HAP-1 (cell line): ENCODE measurements at regions of chr6 and their contacts with region 1.

Region 1: DNA sequence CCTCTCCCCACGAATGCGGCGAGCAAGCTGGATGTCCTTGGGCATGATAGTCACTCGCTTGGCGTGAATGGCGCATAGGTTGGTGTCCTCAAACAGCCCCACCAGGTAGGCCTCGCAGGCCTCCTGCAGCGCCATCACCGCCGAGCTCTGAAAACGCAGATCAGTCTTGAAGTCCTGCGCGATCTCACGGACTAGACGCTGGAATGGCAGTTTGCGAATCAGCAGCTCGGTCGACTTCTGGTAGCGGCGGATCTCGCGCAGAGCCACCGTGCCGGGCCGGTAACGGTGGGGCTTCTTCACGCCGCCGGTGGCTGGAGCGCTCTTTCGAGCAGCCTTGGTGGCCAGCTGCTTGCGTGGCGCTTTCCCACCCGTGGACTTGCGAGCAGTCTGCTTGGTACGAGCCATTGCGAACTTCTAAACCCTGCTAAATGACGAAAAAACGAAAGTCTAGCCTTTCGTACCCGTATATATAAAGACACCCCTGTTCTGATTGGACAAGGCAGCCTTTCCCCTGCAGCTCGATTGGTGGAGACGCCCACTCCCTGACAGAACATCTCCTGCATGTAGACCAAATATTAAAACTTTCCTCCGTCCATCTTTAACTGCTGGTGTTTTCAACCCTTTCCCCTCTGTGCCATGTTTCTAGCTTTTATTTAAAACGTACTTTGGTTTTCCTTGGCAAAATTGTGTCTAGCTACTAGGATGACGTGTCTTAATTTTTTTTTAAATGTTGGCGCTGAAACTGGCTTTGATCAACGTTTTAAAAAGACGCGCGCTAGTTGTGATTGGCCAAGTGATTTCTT is 109.8 kb downstream of the HFE start:
- DNase-seq: peak; percentile 89 to 94
- H3K4me3 ChIP-seq: peak overlapping the region; percentile 73
- H3K4me1 ChIP-seq: peaks cover 27% of the 10 kb centered on the region
- H3K27me3 ChIP-seq: no peaks in the 10 kb centered on the region

Region 2: DNA sequence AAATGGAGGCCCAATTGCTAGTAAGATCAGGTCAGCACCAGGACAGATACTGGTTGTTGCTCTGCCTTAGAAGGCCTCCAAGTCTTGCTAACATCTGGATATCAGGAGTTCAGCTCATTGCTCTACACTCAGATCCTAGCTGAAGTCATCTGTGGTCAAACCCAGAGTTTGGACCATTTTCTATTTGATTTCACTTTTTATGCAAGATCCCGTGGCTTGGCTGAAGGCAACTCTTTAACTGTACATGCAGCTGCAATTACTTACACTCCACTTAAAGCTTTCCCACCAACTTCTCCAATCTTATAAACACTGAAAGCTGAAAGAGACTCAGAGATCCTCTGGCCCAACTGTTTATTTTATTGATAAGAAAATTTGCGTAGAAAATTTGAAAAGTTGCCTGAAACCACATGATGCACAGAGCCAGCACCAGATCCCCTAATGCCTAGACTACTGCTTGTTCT is 269.3 kb before region 1 on chr6:
- in situ Hi-C with region 1: no loop called
- DNase-seq: no peak
- H3K4me3 ChIP-seq: no peak overlapping the region
- H3K4me1 ChIP-seq: no peaks in the 10 kb centered on the region
- H3K27me3 ChIP-seq: no peaks in the 10 kb centered on the region

Region 3: DNA sequence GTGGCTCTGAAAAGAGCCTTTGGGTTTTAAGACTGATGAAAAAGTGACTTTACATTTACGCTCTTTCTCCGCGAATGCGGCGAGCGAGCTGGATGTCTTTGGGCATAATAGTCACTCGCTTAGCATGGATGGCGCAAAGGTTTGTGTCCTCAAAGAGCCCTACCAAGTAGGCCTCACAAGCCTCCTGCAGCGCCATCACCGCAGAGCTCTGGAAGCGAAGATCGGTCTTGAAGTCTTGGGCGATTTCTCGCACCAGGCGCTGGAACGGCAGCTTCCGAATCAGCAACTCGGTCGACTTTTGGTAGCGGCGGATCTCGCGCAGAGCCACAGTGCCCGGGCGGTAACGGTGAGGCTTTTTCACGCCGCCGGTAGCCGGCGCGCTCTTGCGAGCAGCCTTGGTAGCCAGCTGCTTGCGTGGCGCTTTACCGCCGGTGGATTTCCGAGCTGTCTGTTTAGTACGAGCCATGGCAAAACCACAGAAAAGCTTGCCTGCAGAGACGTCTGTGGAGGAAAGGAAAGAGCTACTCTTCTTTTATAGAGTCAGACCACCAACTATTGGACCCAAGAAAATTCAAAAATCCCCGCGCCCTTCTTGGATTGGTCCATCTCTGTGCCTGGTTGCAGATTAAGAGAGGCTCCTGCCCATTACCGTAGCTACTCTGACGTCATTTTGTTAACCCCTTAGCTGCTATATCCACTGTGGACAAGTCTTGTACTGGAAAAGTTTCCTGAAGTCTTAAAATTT is 165.3 kb before region 1 on chr6:
- in situ Hi-C with region 1: loop called (anchors 10 kb)
- DNase-seq: peak; percentile 93 to 97
- H3K4me3 ChIP-seq: peak overlapping the region; percentile 54
- H3K4me1 ChIP-seq: peaks cover 55% of the 10 kb centered on the region
- H3K27me3 ChIP-seq: no peaks in the 10 kb centered on the region

Region 4: GRCh38 chr6:26122793-26123674 is 74.0 kb before region 1 on chr6:
- in situ Hi-C with region 1: loop called (anchors 5 kb)
- DNase-seq: peak; percentile 94
- H3K4me3 ChIP-seq: peak overlapping the region; percentile 82
- H3K4me1 ChIP-seq: peaks cover 36% of the 10 kb centered on the region
- H3K27me3 ChIP-seq: no peaks in the 10 kb centered on the region

Region 5: GRCh38 chr6:27132532-27133280 is 935.7 kb after region 1 on chr6:
- in situ Hi-C with region 1: loop called (anchors 5 kb)
- DNase-seq: peak; percentile 90 to 97
- H3K4me3 ChIP-seq: peak overlapping the region; percentile 51
- H3K4me1 ChIP-seq: peaks cover 43% of the 10 kb centered on the region
- H3K27me3 ChIP-seq: no peaks in the 10 kb centered on the region